ENCODE measurements at regions of chr12 and their contacts with region 1.

Region 1: GRCh38 chr12:47767216-47767724 is 5.8 kb upstream of the SLC48A1 start:
- DNase-seq: no peak
- ATAC-seq: peak; percentile 89
- H3K4me3 ChIP-seq: no peak overlapping the region
- H3K27ac ChIP-seq: no peak overlapping the region
- H3K4me1 ChIP-seq: no peaks in the 10 kb centered on the region
- H3K27me3 ChIP-seq: no peaks in the 10 kb centered on the region
- CTCF ChIP-seq: peak; percentile 68 to 87 (median 73)
- EP300 ChIP-seq: no peak
- POLR2A ChIP-seq: no peak
- RAD21 ChIP-seq: peak; percentile 92

Region 2: DNA sequence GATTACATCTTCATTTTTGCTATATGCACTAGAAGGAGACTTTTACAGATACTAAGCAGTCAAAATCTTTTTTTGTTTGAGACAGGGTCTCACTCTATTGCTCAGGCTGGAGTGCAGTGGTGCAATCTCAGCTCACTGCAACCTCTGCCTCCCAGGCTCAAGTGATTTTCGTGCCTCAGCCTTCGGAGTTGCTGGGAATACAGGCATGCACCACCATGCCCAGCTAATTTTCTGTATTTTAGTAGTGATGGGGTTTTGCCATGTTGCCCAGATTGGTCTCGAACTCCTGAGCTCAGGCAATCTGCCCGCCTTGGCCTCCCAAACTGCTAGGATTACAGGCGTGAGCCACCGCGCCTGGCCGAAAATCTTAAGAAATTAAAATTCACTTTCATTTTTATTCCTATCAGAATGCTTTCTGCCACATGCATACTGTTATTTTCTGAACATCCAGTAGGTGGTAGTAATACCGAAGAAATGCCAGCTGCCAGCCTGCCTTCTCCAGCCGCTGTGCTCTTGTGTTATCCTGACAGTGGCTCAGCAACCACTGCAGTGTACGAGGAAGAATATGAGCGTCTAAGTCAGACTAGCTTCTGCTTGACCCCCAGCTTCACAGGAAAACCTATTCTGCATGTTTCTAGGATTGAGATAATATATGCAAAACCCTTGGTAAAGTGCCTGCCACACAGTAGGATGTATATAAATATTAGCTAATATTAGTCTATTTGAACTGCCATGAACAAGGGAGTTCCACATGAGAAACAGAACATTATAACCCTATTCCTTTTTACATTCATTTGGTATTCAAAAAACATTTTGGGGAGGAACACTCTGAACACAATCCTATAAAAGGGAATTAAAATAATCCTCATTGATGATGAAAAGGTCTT is 115.7 kb before region 1 on chr12:
- CTCF ChIA-PET with region 1: interaction called, 24 read pairs
- POLR2A ChIA-PET with region 1: interaction called, 3 read pairs
- RAD21 ChIA-PET with region 1: interaction called, 15 read pairs
- SMC1A ChIA-PET with region 1: interaction called, 7 read pairs
- in situ Hi-C with region 1: no loop called
- intact Hi-C with region 1: no loop called
- DNase-seq: peak; percentile 23
- ATAC-seq: peak; percentile 96
- H3K4me3 ChIP-seq: no peak overlapping the region
- H3K27ac ChIP-seq: no peak overlapping the region
- H3K4me1 ChIP-seq: peaks cover 13% of the 10 kb centered on the region
- H3K27me3 ChIP-seq: no peaks in the 10 kb centered on the region
- CTCF ChIP-seq: peak; percentile 57 to 72 (median 67)
- EP300 ChIP-seq: no peak
- POLR2A ChIP-seq: no peak
- RAD21 ChIP-seq: peak; percentile 67

Region 3: GRCh38 chr12:47705566-47706425 is 61.5 kb before region 1 on chr12 and contains the start of gene RPAP3:
- CTCF ChIA-PET with region 1: interaction called, 19 read pairs
- POLR2A ChIA-PET with region 1: no interaction called
- RAD21 ChIA-PET with region 1: interaction called, 7 read pairs
- SMC1A ChIA-PET with region 1: interaction called, 6 read pairs
- in situ Hi-C with region 1: no loop called
- intact Hi-C with region 1: no loop called
- DNase-seq: peak; percentile 65
- ATAC-seq: peak; percentile 94
- H3K4me3 ChIP-seq: peak within 1 kb of the TSS; percentile 84
- H3K27ac ChIP-seq: peak within 1 kb of the TSS; percentile 85
- H3K4me1 ChIP-seq: peaks cover 32% of the 10 kb centered on the region
- H3K27me3 ChIP-seq: no peaks in the 10 kb centered on the region
- CTCF ChIP-seq: peak; percentile 38 to 60 (median 48); a peak in 4 of 6 replicates
- EP300 ChIP-seq: no peak
- POLR2A ChIP-seq: peak; percentile 98
- RAD21 ChIP-seq: no peak
- polyA plus RNA-seq, gene RPAP3: 14.1 to 24.5 TPM

Region 4: GRCh38 chr12:47725893-47726292 is 41.4 kb before region 1 on chr12:
- CTCF ChIA-PET with region 1: interaction called, 48 read pairs
- POLR2A ChIA-PET with region 1: interaction called, 3 read pairs
- RAD21 ChIA-PET with region 1: interaction called, 5 read pairs
- SMC1A ChIA-PET with region 1: interaction called, 13 read pairs
- in situ Hi-C with region 1: no loop called
- intact Hi-C with region 1: no loop called
- DNase-seq: no peak
- ATAC-seq: peak; percentile 90
- H3K4me3 ChIP-seq: no peak overlapping the region
- H3K27ac ChIP-seq: no peak overlapping the region
- H3K4me1 ChIP-seq: peaks cover 18% of the 10 kb centered on the region
- H3K27me3 ChIP-seq: no peaks in the 10 kb centered on the region
- CTCF ChIP-seq: no peak
- EP300 ChIP-seq: no peak
- POLR2A ChIP-seq: no peak
- RAD21 ChIP-seq: no peak

Region 5: DNA sequence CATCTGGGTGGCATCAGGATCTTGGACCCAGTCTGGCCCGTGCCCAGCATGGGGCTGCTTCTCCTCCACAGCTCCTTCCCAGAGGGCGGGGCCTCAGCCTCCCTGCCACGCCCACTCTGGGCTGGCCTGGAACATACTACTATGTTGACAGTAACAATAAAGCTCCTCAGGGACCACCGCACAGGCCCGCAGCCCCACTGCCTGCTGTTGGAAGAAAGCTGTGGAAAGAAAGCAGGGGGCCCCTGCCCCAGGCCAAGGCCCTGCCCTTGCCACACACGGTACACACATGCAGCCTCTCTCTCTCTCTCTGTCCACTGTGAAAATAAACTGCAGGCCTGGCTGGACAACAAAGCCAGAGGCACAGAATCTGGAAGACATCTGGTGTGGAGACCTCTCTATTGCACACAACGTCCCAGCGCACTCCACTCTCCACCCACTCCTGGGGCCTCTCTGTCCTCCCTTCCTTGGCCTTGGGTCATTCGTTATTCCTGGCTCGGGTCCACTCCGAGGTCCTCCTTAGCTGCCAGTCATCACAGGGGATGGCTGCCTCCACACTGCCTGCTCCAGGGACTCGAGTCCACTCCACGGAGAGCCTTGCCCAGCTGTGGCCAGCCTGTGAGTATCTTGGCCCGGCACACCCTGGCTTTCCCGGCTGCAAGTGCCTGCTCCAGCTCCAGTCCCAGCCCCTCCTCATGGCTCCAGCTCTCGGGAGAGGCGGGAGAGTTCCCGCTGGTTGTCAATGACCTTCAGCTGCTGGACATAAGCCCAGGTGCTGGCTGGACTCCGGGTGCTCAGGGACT is 30.2 kb before region 1 on chr12:
- CTCF ChIA-PET with region 1: interaction called, 814 read pairs
- POLR2A ChIA-PET with region 1: interaction called, 40 read pairs
- RAD21 ChIA-PET with region 1: interaction called, 327 read pairs
- SMC1A ChIA-PET with region 1: interaction called, 277 read pairs
- in situ Hi-C with region 1: no loop called
- intact Hi-C with region 1: loop called (anchors 1 kb)
- DNase-seq: no peak
- ATAC-seq: no peak
- H3K4me3 ChIP-seq: no peak overlapping the region
- H3K27ac ChIP-seq: no peak overlapping the region
- H3K4me1 ChIP-seq: peaks cover 25% of the 10 kb centered on the region
- H3K27me3 ChIP-seq: no peaks in the 10 kb centered on the region
- CTCF ChIP-seq: no peak
- EP300 ChIP-seq: no peak
- POLR2A ChIP-seq: no peak
- RAD21 ChIP-seq: no peak

Region 6: GRCh38 chr12:47779301-47779942 is 12.2 kb after region 1 on chr12:
- CTCF ChIA-PET with region 1: interaction called, 77 read pairs
- POLR2A ChIA-PET with region 1: no interaction called
- RAD21 ChIA-PET with region 1: interaction called, 31 read pairs
- SMC1A ChIA-PET with region 1: interaction called, 10 read pairs
- in situ Hi-C with region 1: no loop called
- intact Hi-C with region 1: no loop called
- DNase-seq: peak; percentile 53
- ATAC-seq: peak; percentile 95
- H3K4me3 ChIP-seq: no peak overlapping the region
- H3K27ac ChIP-seq: no peak overlapping the region
- H3K4me1 ChIP-seq: peaks cover 11% of the 10 kb centered on the region; the same call in 1 of the 2 replicates
- H3K27me3 ChIP-seq: no peaks in the 10 kb centered on the region
- CTCF ChIP-seq: peak; percentile 92 to 97 (median 95)
- EP300 ChIP-seq: no peak
- POLR2A ChIP-seq: no peak; the same call in none of the 2 replicates
- RAD21 ChIP-seq: peak; percentile 95

Region 7: DNA sequence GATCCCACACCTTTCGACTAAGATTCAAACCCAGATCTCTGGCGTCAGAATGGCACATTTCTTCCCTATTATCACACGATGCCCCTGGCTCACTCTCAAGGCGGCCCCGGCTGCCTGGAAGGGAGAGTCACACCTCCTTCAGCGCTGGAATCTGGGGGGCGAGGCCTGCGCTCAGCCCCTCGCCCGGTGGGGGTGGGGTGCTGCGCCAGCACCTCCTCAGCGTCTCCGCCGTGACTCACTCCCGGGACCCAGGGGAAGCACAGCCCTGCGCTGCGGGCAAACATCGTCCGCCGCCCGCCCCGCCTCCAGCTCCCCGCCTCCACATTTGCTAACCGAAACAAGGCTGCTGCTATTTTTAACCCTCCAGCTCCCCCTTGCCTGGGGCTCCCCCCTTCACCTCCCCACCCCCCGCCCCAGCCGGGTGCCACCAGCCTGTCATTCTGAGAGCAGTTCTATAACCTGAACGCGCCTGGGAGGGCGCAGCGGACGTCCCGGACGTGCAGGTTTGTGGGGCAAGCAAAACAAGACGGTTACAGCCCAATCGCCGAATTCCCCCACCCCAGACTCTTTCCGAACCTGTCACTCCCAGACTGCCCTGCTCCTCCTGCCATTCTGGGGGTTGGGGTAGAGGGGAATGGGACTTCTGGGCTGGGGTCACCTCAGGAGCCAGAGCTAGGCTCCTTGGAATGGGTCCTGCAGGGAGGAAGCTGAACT is 45.7 kb after region 1 on chr12:
- CTCF ChIA-PET with region 1: interaction called, 13 read pairs
- POLR2A ChIA-PET with region 1: no interaction called
- RAD21 ChIA-PET with region 1: interaction called, 4 read pairs
- SMC1A ChIA-PET with region 1: interaction called, 3 read pairs
- in situ Hi-C with region 1: no loop called
- intact Hi-C with region 1: no loop called
- DNase-seq: peak; percentile 73
- ATAC-seq: peak; percentile 83
- H3K4me3 ChIP-seq: peak overlapping the region; percentile 75
- H3K27ac ChIP-seq: peak overlapping the region; percentile 85
- H3K4me1 ChIP-seq: peaks cover 80% of the 10 kb centered on the region
- H3K27me3 ChIP-seq: no peaks in the 10 kb centered on the region; a peak in 2 of 4 replicates
- CTCF ChIP-seq: peak in 1 of 3 experiments; percentile 25; a peak in 2 of 6 replicates
- EP300 ChIP-seq: peak; percentile 16 to 31; a peak in 1 of 4 replicates
- POLR2A ChIP-seq: peak; percentile 88
- RAD21 ChIP-seq: peak; percentile 35; the same call in 1 of the 2 replicates

Region 8: GRCh38 chr12:48151103-48151771 is 384.0 kb after region 1 on chr12:
- CTCF ChIA-PET with region 1: no interaction called
- POLR2A ChIA-PET with region 1: no interaction called
- RAD21 ChIA-PET with region 1: no interaction called
- SMC1A ChIA-PET with region 1: no interaction called
- in situ Hi-C with region 1: no loop called
- intact Hi-C with region 1: no loop called
- DNase-seq: no peak
- ATAC-seq: peak; percentile 54
- H3K4me3 ChIP-seq: no peak overlapping the region
- H3K27ac ChIP-seq: no peak overlapping the region
- H3K4me1 ChIP-seq: peaks cover 20% of the 10 kb centered on the region
- H3K27me3 ChIP-seq: no peaks in the 10 kb centered on the region
- CTCF ChIP-seq: no peak
- EP300 ChIP-seq: no peak
- POLR2A ChIP-seq: no peak
- RAD21 ChIP-seq: no peak